ENCODE measurements at regions of chr4 and their contacts with region 1.

Region 1: GRCh38 chr4:107930821-107931774 is at the start of gene CYP2U1:
- DNase-seq: peak; percentile 88
- ATAC-seq: peak; percentile 95
- H3K4me3 Mint-ChIP-seq: peak within 1 kb of the TSS; percentile 96
- H3K27ac Mint-ChIP-seq: peak within 1 kb of the TSS; percentile 91
- H3K4me1 Mint-ChIP-seq: peaks cover 41% of the 10 kb centered on the region
- H3K27me3 Mint-ChIP-seq: no peaks in the 10 kb centered on the region
- CTCF ChIP-seq: no peak
- total RNA-seq, gene CYP2U1: 9.2 and 11.6 TPM in 2 replicates

Region 2: GRCh38 chr4:106315968-106316772 is 1614.9 kb before region 1 on chr4 and contains the starts of genes AIMP1 and TBCK:
- CTCF ChIA-PET with region 1: no interaction called
- POLR2A ChIA-PET with region 1: no interaction called
- intact Hi-C with region 1: loop called (anchors 2 kb)
- DNase-seq: peak; percentile 78
- ATAC-seq: peak; percentile 90
- H3K4me3 Mint-ChIP-seq: no peak within 1 kb of the TSS
- H3K27ac Mint-ChIP-seq: no peak within 1 kb of the TSS
- H3K4me1 Mint-ChIP-seq: peaks cover 35% of the 10 kb centered on the region
- H3K27me3 Mint-ChIP-seq: no peaks in the 10 kb centered on the region
- CTCF ChIP-seq: no peak
- total RNA-seq, gene AIMP1: 49.4 and 53.5 TPM in 2 replicates
- total RNA-seq, gene TBCK: 45.6 and 60.1 TPM in 2 replicates

Region 3: DNA sequence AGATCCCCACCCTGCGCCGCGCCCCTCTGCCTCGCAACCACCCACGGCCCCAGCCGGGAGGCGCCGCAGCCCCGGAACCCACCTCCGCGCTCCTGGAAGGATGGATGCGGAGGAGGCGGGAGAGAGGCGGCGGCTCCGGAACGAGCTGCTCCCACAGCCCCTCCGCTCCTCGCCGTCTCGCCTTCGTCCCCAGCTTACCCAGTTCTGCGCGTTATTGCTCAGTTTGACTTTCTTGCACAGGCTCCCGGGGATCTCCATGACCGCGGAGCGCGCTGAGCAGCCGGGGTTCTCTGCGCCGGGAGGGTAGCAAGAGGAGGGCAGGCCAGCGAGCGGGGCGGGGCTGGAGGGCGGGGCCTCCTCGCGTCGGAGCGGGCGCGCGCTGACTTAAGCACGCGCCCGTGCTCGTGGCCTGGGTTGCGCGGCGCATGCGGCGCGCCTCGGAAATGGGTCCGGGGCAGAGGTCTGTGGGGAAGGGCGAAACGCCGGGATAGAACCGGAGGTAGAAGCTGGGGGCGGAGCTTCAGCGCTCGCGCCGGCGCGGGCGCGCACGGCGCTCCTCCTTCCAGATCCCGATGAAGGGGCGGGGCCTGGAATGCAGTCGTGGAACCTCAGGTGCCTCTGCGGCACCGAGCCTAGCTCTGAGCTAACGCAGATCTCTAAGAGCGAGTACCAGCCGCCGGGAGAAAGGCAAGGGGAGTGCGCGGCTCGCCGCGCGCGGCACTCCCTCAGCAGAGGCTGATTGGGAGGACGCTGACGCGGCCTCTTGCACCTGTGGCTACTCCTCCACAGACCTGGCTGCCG is 211.0 kb before region 1 on chr4 and contains the start of gene PAPSS1:
- CTCF ChIA-PET with region 1: no interaction called
- POLR2A ChIA-PET with region 1: interaction called, 16 read pairs
- intact Hi-C with region 1: loop called (anchors 1 kb)
- DNase-seq: peak; percentile 92
- ATAC-seq: peak; percentile 87
- H3K4me3 Mint-ChIP-seq: peak within 1 kb of the TSS; percentile 97
- H3K27ac Mint-ChIP-seq: peak within 1 kb of the TSS; percentile 96
- H3K4me1 Mint-ChIP-seq: peaks cover 34% of the 10 kb centered on the region
- H3K27me3 Mint-ChIP-seq: no peaks in the 10 kb centered on the region
- CTCF ChIP-seq: no peak
- total RNA-seq, gene PAPSS1: 31.8 and 34.2 TPM in 2 replicates

Region 4: GRCh38 chr4:108172753-108173598 is 241.9 kb after region 1 on chr4:
- CTCF ChIA-PET with region 1: no interaction called
- POLR2A ChIA-PET with region 1: no interaction called
- intact Hi-C with region 1: loop called (anchors 5 kb)
- DNase-seq: peak; percentile 26
- ATAC-seq: peak; percentile 63
- H3K4me3 Mint-ChIP-seq: peak overlapping the region; percentile 82
- H3K27ac Mint-ChIP-seq: no peak overlapping the region
- H3K4me1 Mint-ChIP-seq: peaks cover 42% of the 10 kb centered on the region
- H3K27me3 Mint-ChIP-seq: peaks cover 52% of the 10 kb centered on the region
- CTCF ChIP-seq: no peak

Region 5: GRCh38 chr4:108650212-108651013 is 719.3 kb after region 1 on chr4 and contains the start of gene OSTC:
- CTCF ChIA-PET with region 1: no interaction called
- POLR2A ChIA-PET with region 1: interaction called, 3 read pairs
- intact Hi-C with region 1: loop called (anchors 1 kb)
- DNase-seq: peak; percentile 87
- ATAC-seq: peak; percentile 93
- H3K4me3 Mint-ChIP-seq: peak within 1 kb of the TSS; percentile 97
- H3K27ac Mint-ChIP-seq: peak within 1 kb of the TSS; percentile 97
- H3K4me1 Mint-ChIP-seq: peaks cover 38% of the 10 kb centered on the region
- H3K27me3 Mint-ChIP-seq: no peaks in the 10 kb centered on the region
- CTCF ChIP-seq: no peak
- total RNA-seq, gene OSTC: 56.7 and 60.1 TPM in 2 replicates

Region 6: GRCh38 chr4:109729718-109730618 is 1798.9 kb after region 1 on chr4 and contains the start of gene PLA2G12A:
- CTCF ChIA-PET with region 1: no interaction called
- POLR2A ChIA-PET with region 1: no interaction called
- intact Hi-C with region 1: loop called (anchors 5 kb)
- DNase-seq: peak; percentile 77
- ATAC-seq: peak; percentile 90
- H3K4me3 Mint-ChIP-seq: peak within 1 kb of the TSS; percentile 90
- H3K27ac Mint-ChIP-seq: peak within 1 kb of the TSS; percentile 79
- H3K4me1 Mint-ChIP-seq: peaks cover 12% of the 10 kb centered on the region
- H3K27me3 Mint-ChIP-seq: no peaks in the 10 kb centered on the region
- CTCF ChIP-seq: no peak
- total RNA-seq, gene PLA2G12A: 6.7 and 9.6 TPM in 2 replicates